Activated CD8-positive, alpha-beta memory T cell treated with anti-CD3 and anti-CD28 coated beads, Interleukin-2, amount 10 ng/mL, durations not matched to agents 7 days and 5 days (primary cell): ENCODE measurements at regions of chr14 and their contacts with region 1.

Region 1: DNA sequence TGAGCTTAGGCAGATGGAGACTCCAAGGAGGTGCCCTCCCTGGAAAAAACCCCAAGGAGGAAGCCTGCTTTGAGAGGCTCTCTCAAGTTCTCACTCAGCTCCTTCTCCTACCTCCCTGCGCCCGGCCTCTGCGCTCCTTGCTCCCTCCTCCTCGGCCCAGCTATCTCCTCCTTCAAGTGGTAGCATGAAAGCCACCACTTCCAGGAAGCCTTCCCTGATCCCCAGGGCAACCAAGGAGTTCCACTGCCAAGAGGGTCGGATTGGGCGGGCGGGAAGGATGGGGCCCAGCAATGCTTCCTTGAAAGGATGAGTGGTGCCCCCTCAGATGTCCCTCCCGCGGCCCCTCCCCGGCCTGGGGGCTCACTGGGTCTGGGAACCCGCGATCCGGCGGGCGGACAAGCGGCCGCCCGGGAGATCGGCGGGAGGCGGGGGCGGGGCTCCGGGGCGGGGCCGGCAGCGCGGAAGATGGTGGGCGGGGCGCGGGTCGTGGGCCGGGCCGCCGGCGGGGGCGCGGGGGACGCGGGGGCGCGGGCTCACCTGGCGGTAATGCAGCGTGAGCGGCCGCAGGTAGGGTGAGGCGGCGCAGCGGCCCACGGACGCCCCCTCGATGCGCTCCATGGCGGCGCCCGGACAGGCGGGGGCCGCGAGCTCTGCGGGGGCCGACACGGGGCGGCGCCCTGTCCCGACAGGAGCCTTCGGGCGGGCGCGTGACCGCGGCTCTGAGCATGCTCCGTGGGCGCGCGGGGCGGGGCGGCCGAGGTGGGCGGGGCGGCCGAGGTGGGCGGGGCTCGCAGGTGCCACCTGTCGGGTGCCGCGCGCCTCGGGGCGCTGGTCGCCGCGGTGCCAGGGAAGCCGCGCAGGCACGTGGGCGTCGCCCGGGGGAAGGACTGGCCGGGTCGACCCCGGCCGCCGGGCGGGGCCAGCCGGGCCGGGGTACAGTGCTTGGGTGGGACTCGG is at the start of gene NUDT14:
- DNase-seq: peak; percentile 86
- ATAC-seq: peak; percentile 90
- H3K4me3 Mint-ChIP-seq: peak within 1 kb of the TSS; percentile 66
- H3K27ac Mint-ChIP-seq: peak within 1 kb of the TSS; percentile 59
- H3K4me1 Mint-ChIP-seq: peaks cover 22% of the 10 kb centered on the region
- H3K27me3 Mint-ChIP-seq: peaks cover 12% of the 10 kb centered on the region
- total RNA-seq, gene NUDT14: 16.2 to 20.9 TPM

Region 2: GRCh38 chr14:105168979-105169507 is 11.8 kb before region 1 on chr14:
- CTCF ChIA-PET with region 1: interaction called, 10 read pairs
- DNase-seq: no peak
- ATAC-seq: peak; percentile 43
- H3K4me3 Mint-ChIP-seq: no peak overlapping the region
- H3K27ac Mint-ChIP-seq: no peak overlapping the region
- H3K4me1 Mint-ChIP-seq: peaks cover 6% of the 10 kb centered on the region
- H3K27me3 Mint-ChIP-seq: peaks cover 25% of the 10 kb centered on the region

Region 3: GRCh38 chr14:105193916-105194782 is 13.3 kb after region 1 on chr14:
- CTCF ChIA-PET with region 1: interaction called, 13 read pairs
- DNase-seq: no peak
- ATAC-seq: peak; percentile 20
- H3K4me3 Mint-ChIP-seq: no peak overlapping the region
- H3K27ac Mint-ChIP-seq: no peak overlapping the region
- H3K4me1 Mint-ChIP-seq: peaks cover 24% of the 10 kb centered on the region
- H3K27me3 Mint-ChIP-seq: peaks cover 31% of the 10 kb centered on the region